ENCODE measurements at regions of chr10 and their contacts with region 1.

Region 1: DNA sequence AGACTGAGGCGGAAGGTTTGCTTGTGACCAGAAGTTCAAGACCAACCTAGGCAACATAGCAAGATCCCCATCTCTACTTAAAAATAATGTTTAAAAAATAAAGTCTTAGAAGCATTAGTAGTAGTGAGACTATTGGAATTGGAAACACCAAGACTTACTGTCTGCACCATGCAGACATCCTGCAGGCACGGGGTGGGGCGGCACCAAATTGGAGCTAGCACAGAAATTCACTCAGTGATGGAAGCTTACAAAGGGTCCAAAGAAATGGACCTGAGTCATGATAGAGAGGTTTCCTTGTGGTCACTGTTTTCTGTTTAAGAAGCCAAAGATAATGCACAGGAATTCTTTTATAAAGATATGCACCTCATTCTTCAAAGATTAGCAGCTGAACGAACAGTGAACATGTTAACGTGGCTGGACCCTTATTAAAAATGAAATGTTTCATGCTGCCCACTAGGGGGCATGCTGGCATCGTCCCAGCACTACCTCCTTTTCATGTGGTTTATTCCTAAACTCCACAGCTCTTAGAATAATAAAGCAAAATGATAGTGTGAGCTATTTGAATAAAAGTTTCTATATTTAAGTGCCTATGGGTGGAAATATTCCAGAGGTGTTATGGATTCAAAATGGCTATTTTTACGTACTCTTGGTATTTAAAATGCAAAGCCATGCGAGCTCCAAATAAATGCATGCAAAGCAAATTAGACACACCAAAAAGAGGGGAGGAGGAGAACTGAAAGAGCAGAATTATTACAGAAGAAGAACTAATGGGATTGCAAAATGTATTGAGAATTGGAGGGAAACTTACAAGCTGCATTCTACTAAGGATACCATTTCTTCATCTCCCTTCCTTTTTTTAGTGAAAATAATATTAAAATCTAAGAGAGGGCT is 28.6 kb downstream of the PDSS1 start:
- DNase-seq: peak; percentile 48 to 79 (median 65)
- H3K4me3 ChIP-seq: no peak overlapping the region
- H3K27ac ChIP-seq: no peak overlapping the region
- H3K4me1 ChIP-seq: no peaks in the 10 kb centered on the region
- H3K27me3 ChIP-seq: no peaks in the 10 kb centered on the region
- CTCF ChIP-seq: peak; percentile 74 to 87 (median 81)
- POLR2A ChIP-seq: no peak

Region 2: GRCh38 chr10:26881600-26882331 is 155.7 kb after region 1 on chr10:
- intact Hi-C with region 1: loop called (anchors 2 to 10 kb)
- DNase-seq: peak in 1 of 7 donors; percentile 8
- H3K4me3 ChIP-seq: no peak overlapping the region
- H3K27ac ChIP-seq: no peak overlapping the region
- H3K4me1 ChIP-seq: no peaks in the 10 kb centered on the region
- H3K27me3 ChIP-seq: peaks cover 9% of the 10 kb centered on the region
- CTCF ChIP-seq: peak; percentile 35 to 89 (median 78)
- POLR2A ChIP-seq: no peak